ENCODE measurements at regions of chr18 and their contacts with region 1.

Region 1: DNA sequence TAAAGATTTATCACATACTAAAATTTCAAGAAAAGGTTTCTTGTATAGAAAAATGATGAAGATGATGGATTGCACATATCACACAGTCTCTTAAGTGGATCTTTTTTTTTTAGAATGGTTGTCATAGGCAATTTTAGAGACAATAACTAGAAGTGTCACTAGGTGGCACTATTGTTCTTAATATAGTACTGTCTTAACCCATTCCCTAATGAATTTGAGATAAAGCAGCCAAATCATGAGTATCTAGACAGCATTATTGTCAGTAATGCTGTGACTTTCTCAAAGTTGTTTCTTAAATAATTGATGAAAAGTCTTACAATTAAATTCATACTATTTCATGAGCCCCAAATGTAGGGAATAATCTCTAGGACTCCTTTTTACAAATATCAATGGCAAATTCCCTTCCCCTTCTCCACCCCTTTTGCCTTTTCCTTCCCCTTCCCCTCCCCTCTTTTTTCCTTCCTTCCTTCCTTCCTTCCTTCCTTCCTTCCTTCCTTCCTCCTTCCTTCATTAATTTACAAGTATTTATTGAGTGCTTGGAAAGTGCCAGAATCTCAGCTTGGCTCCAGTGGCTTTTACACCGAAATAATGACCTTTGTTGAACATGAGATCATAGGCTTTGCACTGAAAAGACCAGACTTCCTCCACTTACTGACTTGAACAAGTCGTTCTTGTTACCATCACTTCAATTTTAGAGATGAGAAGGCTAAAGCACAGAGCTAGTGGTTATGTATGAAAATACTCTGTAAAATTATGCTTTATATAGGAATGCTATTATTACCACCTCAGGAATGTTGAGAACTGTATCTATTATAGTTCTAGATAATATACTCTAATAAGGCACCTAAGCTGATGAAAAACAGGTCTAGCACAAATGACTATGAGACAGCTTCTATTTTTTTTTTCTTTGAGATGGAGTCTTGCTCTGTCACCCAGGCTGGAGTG is 19.8 kb downstream of the MYL12B start:
- DNase-seq: peak in 2 of 35 experiments; percentile 20 to 84
- ATAC-seq: peak; percentile 61 to 89 (median 80)
- H3K4me3 ChIP-seq: no peak overlapping the region
- H3K4me3 Mint-ChIP-seq: no peak overlapping the region
- H3K27ac ChIP-seq: no peak overlapping the region
- H3K27ac Mint-ChIP-seq: no peak overlapping the region
- H3K4me1 ChIP-seq: no peaks in the 10 kb centered on the region
- H3K4me1 Mint-ChIP-seq: peaks cover 0 to 6% (median 0%) of the 10 kb centered on the region in 3 donors
- H3K27me3 ChIP-seq: peaks cover 0 to 3% of the 10 kb centered on the region in 2 experiments
- H3K27me3 Mint-ChIP-seq: no peaks in the 10 kb centered on the region

Region 2: DNA sequence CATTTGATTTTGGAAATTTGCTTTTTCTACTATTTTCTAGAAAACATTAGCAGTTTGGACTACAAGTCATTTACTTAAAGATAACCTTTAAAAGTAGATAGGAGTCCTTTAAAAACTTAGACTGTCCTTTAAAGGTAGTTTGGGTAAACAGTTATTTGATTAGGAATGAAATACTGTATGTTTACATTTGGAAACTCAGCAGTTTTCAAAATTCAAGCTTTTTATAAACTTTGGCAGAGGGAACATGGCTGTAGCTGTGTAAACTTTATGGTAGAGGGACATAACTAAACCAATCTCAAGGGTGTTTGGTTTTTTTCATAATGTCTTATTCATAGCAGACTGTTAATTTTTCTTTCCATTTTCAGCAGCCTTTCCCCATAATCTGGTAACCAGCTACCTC is 535.5 kb before region 1 on chr18:
- CTCF ChIA-PET with region 1: no interaction called
- POLR2A ChIA-PET with region 1: no interaction called
- DNase-seq: no peak
- ATAC-seq: no peak
- H3K4me3 ChIP-seq: no peak overlapping the region
- H3K4me3 Mint-ChIP-seq: no peak overlapping the region
- H3K27ac ChIP-seq: peak overlapping the region; percentile 2
- H3K27ac Mint-ChIP-seq: peak overlapping the region; percentile 18 to 74
- H3K4me1 ChIP-seq: no peaks in the 10 kb centered on the region
- H3K4me1 Mint-ChIP-seq: peaks cover 30 to 50% (median 38%) of the 10 kb centered on the region in 3 donors
- H3K27me3 ChIP-seq: no peaks in the 10 kb centered on the region
- H3K27me3 Mint-ChIP-seq: no peaks in the 10 kb centered on the region

Region 3: DNA sequence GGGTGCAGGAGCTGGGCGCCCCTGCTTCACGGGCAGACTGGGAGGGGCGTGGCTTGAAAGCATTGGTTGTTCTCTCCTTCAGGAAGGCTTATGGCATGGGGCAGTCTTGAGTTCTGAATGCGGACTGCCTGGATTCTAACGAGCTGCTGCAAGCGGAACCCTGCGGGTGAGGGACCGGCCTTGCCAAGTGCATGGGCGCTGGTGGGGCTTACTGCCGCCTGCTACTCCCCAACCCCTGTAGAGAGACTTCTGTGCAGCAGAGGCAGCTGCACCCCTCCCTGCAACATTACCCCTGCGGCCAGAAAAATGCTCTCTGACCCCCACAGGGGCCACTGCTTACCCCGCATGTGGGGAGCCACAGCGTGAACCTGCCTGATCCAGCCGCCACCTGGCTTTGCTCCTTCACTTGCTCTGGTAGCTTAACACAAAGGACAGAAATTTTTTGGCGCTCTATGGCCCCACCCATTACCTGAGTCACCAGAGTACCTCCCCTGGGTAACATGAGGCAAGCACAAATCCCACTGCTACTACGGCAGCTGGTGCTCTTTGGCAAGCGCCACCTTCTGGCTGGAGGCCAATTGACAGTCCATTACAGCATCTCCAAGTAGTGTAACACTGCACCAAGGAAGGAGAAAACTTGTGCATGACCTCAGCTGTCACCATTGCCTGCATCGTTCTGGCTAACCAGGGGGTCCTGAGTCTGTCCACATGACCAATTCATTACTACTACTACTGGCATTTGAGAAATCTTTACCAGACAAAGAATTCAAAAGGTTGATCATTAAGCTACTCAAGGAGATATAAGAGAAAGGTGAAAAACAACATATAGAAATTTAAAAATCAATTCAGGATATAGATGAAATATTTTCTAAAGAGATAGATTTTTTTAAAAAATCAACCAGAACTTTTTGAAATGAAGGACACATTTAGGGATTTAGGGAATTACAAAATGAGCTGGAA is 15.6 kb after region 1 on chr18:
- CTCF ChIA-PET with region 1: interaction called, 7 to 15 read pairs
- POLR2A ChIA-PET with region 1: interaction called in 1 of 2 experiments, 5 read pairs
- DNase-seq: peak; percentile 84 to 95 (median 91)
- ATAC-seq: peak; percentile 95 to 100 (median 98)
- H3K4me3 ChIP-seq: peak overlapping the region; percentile 73 to 77
- H3K4me3 Mint-ChIP-seq: peak overlapping the region; percentile 93 to 94 (median 94)
- H3K27ac ChIP-seq: no peak overlapping the region
- H3K27ac Mint-ChIP-seq: peak overlapping the region; percentile 82 to 90
- H3K4me1 ChIP-seq: peaks cover 4 to 14% of the 10 kb centered on the region in 2 experiments
- H3K4me1 Mint-ChIP-seq: peaks cover 11 to 14% (median 13%) of the 10 kb centered on the region in 3 donors
- H3K27me3 ChIP-seq: peaks cover 0 to 4% of the 10 kb centered on the region in 2 experiments
- H3K27me3 Mint-ChIP-seq: peaks cover 29 to 32% of the 10 kb centered on the region in 2 donors

Region 4: GRCh38 chr18:3547891-3548615 is 266.3 kb after region 1 on chr18:
- CTCF ChIA-PET with region 1: no interaction called
- POLR2A ChIA-PET with region 1: no interaction called
- DNase-seq: no peak
- ATAC-seq: no peak
- H3K4me3 ChIP-seq: no peak overlapping the region
- H3K4me3 Mint-ChIP-seq: no peak overlapping the region
- H3K27ac ChIP-seq: no peak overlapping the region
- H3K27ac Mint-ChIP-seq: no peak overlapping the region
- H3K4me1 ChIP-seq: no peaks in the 10 kb centered on the region
- H3K4me1 Mint-ChIP-seq: no peaks in the 10 kb centered on the region
- H3K27me3 ChIP-seq: no peaks in the 10 kb centered on the region
- H3K27me3 Mint-ChIP-seq: no peaks in the 10 kb centered on the region

Measured in T-cell (primary cell).